Mammary epithelial cell (primary cell): ENCODE measurements at regions of chr10 and their contacts with region 1.

Region 1: GRCh38 chr10:101569838-101570766 is 18.0 kb downstream of the POLL start:
- DNase-seq: peak; percentile 61
- H3K4me3 ChIP-seq: peak overlapping the region; percentile 56 to 80 (median 72)
- H3K27ac ChIP-seq: no peak overlapping the region
- H3K4me1 ChIP-seq: peaks cover 19% of the 10 kb centered on the region
- H3K27me3 ChIP-seq: no peaks in the 10 kb centered on the region
- CTCF ChIP-seq: peak; percentile 24 to 75

Region 2: GRCh38 chr10:101060036-101060950 is 509.8 kb before region 1 on chr10:
- CTCF ChIA-PET with region 1: no interaction called
- dilution Hi-C with region 1: no loop called
- in situ Hi-C with region 1: no loop called
- intact Hi-C with region 1: loop called (anchors 5 kb)
- DNase-seq: peak; percentile 93
- H3K4me3 ChIP-seq: peak overlapping the region; percentile 80 to 100 (median 81)
- H3K27ac ChIP-seq: peak overlapping the region; percentile 95
- H3K4me1 ChIP-seq: peaks cover 25% of the 10 kb centered on the region
- H3K27me3 ChIP-seq: no peaks in the 10 kb centered on the region
- CTCF ChIP-seq: peak; percentile 88 to 95

Region 3: GRCh38 chr10:101297901-101298486 is 272.1 kb before region 1 on chr10:
- CTCF ChIA-PET with region 1: interaction called, 6 read pairs
- dilution Hi-C with region 1: loop called (anchors 10 kb)
- in situ Hi-C with region 1: loop called (anchors 5 kb)
- intact Hi-C with region 1: loop called (anchors 1 kb)
- DNase-seq: peak; percentile 37
- H3K4me3 ChIP-seq: no peak overlapping the region
- H3K27ac ChIP-seq: no peak overlapping the region
- H3K4me1 ChIP-seq: no peaks in the 10 kb centered on the region
- H3K27me3 ChIP-seq: no peaks in the 10 kb centered on the region
- CTCF ChIP-seq: peak; percentile 88 to 91

Region 4: DNA sequence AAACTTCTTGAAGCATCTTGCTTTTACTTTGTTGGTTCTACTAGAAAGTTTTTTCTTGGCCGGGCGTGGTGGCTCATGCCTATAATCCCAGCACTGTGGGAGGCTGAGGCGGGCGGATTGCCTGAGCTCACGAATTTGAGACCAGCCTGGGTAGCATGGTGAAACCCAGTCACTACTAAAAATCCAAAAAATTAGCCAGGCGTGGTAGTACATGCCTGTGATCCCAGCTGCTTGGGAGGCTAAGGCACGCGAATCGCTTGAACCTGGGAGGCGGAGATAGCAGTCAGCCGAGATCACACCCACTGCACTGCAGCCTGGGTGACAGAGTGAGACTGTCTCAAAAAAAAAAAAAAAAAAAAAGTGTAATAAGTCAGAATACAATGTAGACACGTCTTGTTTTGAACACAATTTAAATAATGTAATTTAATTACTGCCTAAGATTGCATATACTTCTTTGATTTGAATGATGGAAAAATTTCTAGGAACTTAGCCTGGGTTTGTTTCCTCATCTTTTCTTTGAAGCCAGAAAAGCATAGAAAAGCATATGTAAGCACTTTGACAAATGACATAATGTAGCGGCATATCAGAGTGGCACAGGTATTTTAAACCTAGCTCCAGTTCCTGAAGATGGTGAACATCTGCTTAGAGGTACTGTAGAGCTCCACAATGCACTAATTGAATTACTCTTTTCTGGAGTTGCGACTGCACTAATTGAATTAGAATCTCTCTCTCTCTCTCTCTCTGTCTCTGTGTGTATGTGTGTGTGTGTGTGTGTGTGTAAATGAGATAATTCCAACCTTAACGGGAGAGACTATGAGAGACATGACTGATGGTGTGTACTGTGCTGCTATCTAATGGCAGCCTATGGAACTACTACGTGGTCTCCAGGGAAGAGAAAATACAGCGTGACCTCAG is 128.3 kb before region 1 on chr10:
- CTCF ChIA-PET with region 1: interaction called, 4 read pairs
- dilution Hi-C with region 1: no loop called
- in situ Hi-C with region 1: no loop called
- intact Hi-C with region 1: loop called (anchors 1 kb)
- DNase-seq: peak; percentile 67
- H3K4me3 ChIP-seq: no peak overlapping the region
- H3K27ac ChIP-seq: no peak overlapping the region
- H3K4me1 ChIP-seq: no peaks in the 10 kb centered on the region
- H3K27me3 ChIP-seq: no peaks in the 10 kb centered on the region
- CTCF ChIP-seq: peak; percentile 76 to 86

Region 5: DNA sequence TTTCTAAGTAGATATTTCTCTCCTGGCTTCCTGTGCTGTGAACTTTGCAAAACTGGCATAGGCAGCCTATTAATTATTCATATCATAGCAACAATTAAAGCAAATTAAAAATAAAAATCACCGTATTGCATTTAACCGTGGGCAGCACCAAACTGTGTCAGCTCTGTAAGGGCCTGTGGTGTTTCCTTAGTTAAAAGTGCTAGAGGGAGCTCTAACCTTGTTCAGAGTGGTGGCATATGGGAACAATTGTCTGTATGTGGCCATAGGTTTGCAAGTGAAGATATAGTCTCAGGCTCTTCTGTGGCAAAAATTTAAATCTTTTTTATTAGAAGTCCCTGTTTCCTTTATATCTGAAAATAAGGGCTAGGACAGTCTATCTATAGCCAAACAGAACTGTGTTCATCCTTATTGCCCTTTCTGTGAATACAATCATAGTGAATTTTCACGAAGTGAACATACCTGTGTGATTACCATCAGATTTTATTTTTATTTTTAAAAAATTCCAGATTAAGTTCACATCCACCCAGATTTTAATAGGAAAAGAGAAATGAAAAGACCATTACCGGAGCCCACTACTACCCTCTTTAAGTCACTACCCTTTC is 74.7 kb before region 1 on chr10:
- CTCF ChIA-PET with region 1: no interaction called
- dilution Hi-C with region 1: no loop called
- in situ Hi-C with region 1: no loop called
- intact Hi-C with region 1: loop called (anchors 1 kb)
- DNase-seq: peak; percentile 14
- H3K4me3 ChIP-seq: no peak overlapping the region
- H3K27ac ChIP-seq: no peak overlapping the region
- H3K4me1 ChIP-seq: no peaks in the 10 kb centered on the region
- H3K27me3 ChIP-seq: no peaks in the 10 kb centered on the region
- CTCF ChIP-seq: peak; percentile 11 to 47